Breast epithelium (tissue), 4 donors: ENCODE measurements at regions of chr1 and their contacts with region 1.

Region 1: GRCh38 chr1:87284502-87285240 is 44.0 kb upstream of the LMO4 start:
- DNase-seq: no peak
- H3K4me3 ChIP-seq: no peak overlapping the region
- H3K27ac ChIP-seq: no peak overlapping the region
- H3K4me1 ChIP-seq: no peaks in the 10 kb centered on the region
- H3K27me3 ChIP-seq: no peaks in the 10 kb centered on the region
- CTCF ChIP-seq: no peak
- POLR2A ChIP-seq: no peak

Region 2: GRCh38 chr1:87243573-87243972 is 41.1 kb before region 1 on chr1:
- intact Hi-C with region 1: no loop called
- DNase-seq: no peak
- H3K4me3 ChIP-seq: no peak overlapping the region
- H3K27ac ChIP-seq: no peak overlapping the region
- H3K4me1 ChIP-seq: no peaks in the 10 kb centered on the region
- H3K27me3 ChIP-seq: no peaks in the 10 kb centered on the region
- CTCF ChIP-seq: no peak
- POLR2A ChIP-seq: no peak

Region 3: GRCh38 chr1:88302843-88303486 is 1018.3 kb after region 1 on chr1:
- intact Hi-C with region 1: loop called (anchors 5 kb)
- DNase-seq: no peak
- H3K4me3 ChIP-seq: no peak overlapping the region
- H3K27ac ChIP-seq: no peak overlapping the region
- H3K4me1 ChIP-seq: no peaks in the 10 kb centered on the region
- H3K27me3 ChIP-seq: no peaks in the 10 kb centered on the region
- CTCF ChIP-seq: peak in 1 of 3 donors; percentile 16
- POLR2A ChIP-seq: no peak